Adrenal gland (tissue), 19 donors: ENCODE measurements at regions of chr11 and their contacts with region 1.

Region 1: GRCh38 chr11:73307323-73308002 is 613 bp upstream of the ARHGEF17 start:
- DNase-seq: peak; percentile 95 to 99 (median 98)
- H3K4me3 ChIP-seq: peak overlapping the region in 3 of 4 donors; percentile 18 to 71 (median 65)
- H3K27ac ChIP-seq: peak overlapping the region in 3 of 5 donors; percentile 83 to 89 (median 87)
- H3K4me1 ChIP-seq: peaks cover 5 to 11% of the 10 kb centered on the region in 2 donors
- H3K27me3 ChIP-seq: no peaks in the 10 kb centered on the region
- CTCF ChIP-seq: peak; percentile 77 to 94 (median 88)
- POLR2A ChIP-seq: peak in 1 of 2 donors; percentile 24

Region 2: DNA sequence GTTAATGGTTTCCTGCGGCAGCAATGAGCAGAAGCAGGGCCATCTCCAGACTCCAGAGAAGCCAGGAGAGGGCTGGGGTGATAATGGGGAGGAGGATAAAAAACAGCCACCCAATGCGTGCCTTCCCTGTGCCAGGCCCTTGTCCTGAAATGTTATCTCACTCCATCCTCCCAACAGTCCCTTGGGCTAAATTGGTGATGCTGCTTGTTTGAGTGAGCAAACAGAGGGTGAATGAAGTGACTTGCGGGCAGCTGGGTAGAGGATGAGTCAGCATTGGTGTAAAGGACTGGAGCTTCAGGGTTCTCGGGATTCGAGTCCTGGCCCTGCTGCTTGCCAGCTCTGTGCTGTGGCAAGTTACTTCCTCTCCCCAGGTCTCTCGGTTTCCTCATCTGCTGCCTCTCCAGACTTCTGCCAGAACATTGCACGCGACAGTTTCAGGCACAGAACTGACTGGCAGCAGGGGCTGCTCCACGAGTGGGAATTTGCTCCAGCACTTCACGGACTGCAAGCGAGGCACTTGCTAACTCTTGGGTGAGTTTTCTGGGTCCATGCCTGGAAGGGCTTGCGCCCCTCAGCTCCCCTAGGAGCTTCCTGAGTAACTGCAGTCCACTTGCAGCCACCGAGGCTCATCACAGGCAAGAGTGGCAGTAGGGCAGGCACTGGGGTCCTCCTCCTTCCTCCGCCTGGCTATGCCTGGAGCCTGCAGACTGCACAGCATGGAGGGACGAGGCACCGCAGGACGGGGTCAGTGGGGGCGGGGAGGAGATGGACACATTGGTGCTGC is 35.3 kb before region 1 on chr11 and contains the start of gene P2RY6:
- intact Hi-C with region 1: no loop called
- DNase-seq: peak; percentile 25 to 74 (median 57)
- H3K4me3 ChIP-seq: peak within 1 kb of the TSS in 1 of 4 donors; percentile 26
- H3K27ac ChIP-seq: peak within 1 kb of the TSS in 3 of 5 donors; percentile 17 to 76 (median 49)
- H3K4me1 ChIP-seq: no peaks in the 10 kb centered on the region
- H3K27me3 ChIP-seq: no peaks in the 10 kb centered on the region
- CTCF ChIP-seq: no peak
- POLR2A ChIP-seq: peak in 1 of 2 donors; percentile 33
- total RNA-seq, gene P2RY6: 0.33 to 5.9 (median 4.2) TPM

Region 3: DNA sequence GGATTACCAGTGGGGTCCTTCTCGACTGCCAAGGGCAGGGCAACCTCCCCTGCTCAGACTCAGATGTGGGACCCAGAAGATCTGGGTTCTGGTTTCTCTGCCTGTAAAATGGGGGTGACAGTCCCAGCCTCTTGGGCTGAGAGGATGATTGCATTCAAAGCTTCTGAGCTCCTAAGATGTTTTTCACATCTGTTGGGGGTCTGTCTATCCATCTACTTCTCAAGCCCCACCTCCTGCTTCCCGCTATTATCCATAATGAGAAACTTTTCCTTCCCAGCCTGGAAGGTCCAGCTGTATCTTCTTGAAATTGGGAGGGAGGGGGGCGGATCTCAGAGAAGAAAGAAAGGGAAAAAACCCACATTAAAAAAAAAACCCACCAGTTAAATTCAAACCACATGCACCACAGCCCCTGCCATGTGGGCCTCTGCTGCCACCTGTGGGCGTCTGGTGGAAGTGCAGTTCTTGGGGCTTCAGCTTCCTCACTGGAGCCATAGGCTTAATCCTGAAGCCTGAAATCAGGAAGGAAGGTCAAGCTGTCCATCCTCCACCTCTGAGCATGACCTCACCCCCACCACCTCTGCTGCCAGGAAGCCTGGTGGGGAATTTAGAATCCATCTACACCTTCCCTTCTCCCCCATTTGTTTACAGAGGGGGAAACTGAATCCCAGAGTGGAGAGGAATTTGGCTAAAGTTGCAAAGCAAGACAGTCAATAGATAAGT is 27.9 kb after region 1 on chr11:
- intact Hi-C with region 1: loop called (anchors 2 to 5 kb)
- DNase-seq: peak; percentile 73 to 94 (median 87)
- H3K4me3 ChIP-seq: no peak overlapping the region
- H3K27ac ChIP-seq: peak overlapping the region in 2 of 5 donors; percentile 3 to 78
- H3K4me1 ChIP-seq: peaks cover 0 to 21% of the 10 kb centered on the region in 2 donors
- H3K27me3 ChIP-seq: no peaks in the 10 kb centered on the region
- CTCF ChIP-seq: peak; percentile 87 to 99 (median 94)
- POLR2A ChIP-seq: no peak

Region 4: DNA sequence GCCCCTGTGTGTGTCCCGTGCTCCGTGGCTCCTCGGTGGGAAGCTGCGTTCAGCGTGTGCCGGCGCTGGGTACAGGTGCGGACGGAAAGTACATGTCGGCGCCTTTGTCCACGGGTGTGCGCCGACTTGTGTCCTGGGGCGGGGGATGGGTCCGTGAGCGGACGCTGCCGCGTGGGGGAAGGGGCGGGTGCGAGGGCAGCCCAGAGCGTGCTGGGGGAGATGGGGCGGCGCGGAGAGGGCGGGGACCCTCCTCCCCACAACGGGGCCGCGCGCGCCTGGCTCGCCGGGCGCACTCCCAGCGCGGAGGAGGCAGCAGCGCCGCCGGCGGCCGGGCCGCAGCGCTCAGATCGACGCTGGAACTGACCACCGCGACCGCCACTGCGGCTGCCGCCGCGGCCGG is 35.2 kb after region 1 on chr11:
- intact Hi-C with region 1: loop called in 1 of 2 experiments (anchors 5 kb)
- DNase-seq: no peak
- H3K4me3 ChIP-seq: peak overlapping the region in 1 of 4 donors; percentile 52
- H3K27ac ChIP-seq: peak overlapping the region in 2 of 5 donors; percentile 16 to 65
- H3K4me1 ChIP-seq: peaks cover 5 to 17% of the 10 kb centered on the region in 2 donors
- H3K27me3 ChIP-seq: no peaks in the 10 kb centered on the region
- CTCF ChIP-seq: no peak
- POLR2A ChIP-seq: no peak

Region 5: DNA sequence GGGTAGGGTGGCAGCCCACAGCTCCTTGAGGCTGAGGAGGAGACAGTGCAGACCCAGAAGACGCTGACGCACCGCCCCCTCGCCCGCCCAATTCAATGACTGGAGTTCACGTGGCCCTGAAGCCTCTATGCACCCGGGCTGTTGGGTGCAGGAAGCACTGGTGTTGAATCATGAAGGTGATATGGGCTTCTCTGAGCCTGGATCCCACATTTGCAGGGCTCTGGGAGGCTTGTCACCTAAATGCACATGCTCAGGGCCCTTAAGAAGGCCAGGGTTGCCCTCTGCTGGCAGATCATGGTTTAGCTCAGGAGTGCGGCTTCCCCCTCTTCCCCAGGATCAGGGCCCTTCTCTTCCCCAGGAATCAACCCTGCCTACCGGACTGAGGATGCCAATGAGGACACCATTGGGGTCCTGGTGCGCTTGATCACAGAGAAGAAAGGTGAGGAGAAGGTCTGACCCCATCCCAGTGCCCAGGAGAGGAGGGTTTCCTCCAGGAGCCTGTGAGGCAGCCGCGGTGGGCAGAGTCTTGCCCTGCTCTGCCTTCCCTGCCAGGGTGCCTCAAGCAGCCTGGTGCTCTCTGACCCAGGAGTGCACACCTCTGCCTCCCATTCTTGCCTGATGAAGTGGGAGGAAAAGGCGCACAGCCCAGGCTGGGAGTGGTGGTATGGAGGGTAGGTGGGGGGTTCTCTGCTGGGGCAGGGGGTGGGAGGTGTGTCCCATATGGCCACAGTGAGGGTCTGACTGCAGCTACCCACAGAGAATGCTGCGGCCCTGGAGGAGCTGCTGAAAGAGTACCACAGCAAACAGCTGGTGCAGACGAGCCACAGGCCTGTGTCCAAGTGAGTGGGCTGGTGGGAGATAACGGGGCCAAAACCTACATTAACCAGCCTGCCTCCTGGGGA is 86.3 kb after region 1 on chr11:
- intact Hi-C with region 1: loop called (anchors 5 to 10 kb)
- DNase-seq: peak; percentile 74 to 92 (median 82)
- H3K4me3 ChIP-seq: no peak overlapping the region
- H3K27ac ChIP-seq: no peak overlapping the region
- H3K4me1 ChIP-seq: no peaks in the 10 kb centered on the region
- H3K27me3 ChIP-seq: no peaks in the 10 kb centered on the region
- CTCF ChIP-seq: peak; percentile 62 to 89 (median 85)
- POLR2A ChIP-seq: no peak

Region 6: DNA sequence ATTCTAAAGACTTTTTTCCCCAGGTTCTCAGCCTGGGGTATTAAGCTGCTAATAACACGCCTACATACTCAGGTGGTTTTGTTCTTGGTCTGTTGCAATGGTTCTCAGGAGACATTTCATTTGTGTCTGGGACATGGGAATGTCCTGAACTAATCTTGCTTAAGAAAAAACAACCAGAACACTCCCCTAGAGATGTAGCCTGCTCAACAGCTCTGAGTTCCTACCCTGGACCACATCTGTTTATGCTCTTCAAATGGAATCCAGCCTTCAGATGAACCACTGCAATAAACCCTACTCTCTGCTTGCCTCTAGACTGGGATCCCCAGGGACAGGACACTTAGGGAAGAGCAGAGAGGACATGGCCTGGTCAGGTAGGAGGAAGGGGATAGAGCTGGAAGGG is 98.7 kb after region 1 on chr11:
- intact Hi-C with region 1: no loop called
- DNase-seq: no peak
- H3K4me3 ChIP-seq: no peak overlapping the region
- H3K27ac ChIP-seq: no peak overlapping the region
- H3K4me1 ChIP-seq: no peaks in the 10 kb centered on the region
- H3K27me3 ChIP-seq: no peaks in the 10 kb centered on the region
- CTCF ChIP-seq: no peak
- POLR2A ChIP-seq: no peak